ENCODE measurements at regions of chr12 and their contacts with region 1.

Region 1: GRCh38 chr12:124567661-124568373 is 405 bp upstream of the NCOR2 start:
- DNase-seq: peak; percentile 98
- ATAC-seq: peak; percentile 92
- H3K4me3 ChIP-seq: no peak overlapping the region
- H3K27ac ChIP-seq: peak overlapping the region in 1 of 2 donors; percentile 75
- H3K4me1 ChIP-seq: no peaks in the 10 kb centered on the region
- H3K27me3 ChIP-seq: no peaks in the 10 kb centered on the region

Region 2: GRCh38 chr12:124518051-124518932 is 49.5 kb before region 1 on chr12:
- intact Hi-C with region 1: loop called (anchors 1 to 5 kb)
- DNase-seq: peak; percentile 98 to 99
- ATAC-seq: peak; percentile 84
- H3K4me3 ChIP-seq: no peak overlapping the region
- H3K27ac ChIP-seq: peak overlapping the region; percentile 87 to 98
- H3K4me1 ChIP-seq: no peaks in the 10 kb centered on the region
- H3K27me3 ChIP-seq: no peaks in the 10 kb centered on the region

Region 3: GRCh38 chr12:124620751-124621660 is 53.2 kb after region 1 on chr12:
- intact Hi-C with region 1: loop called in 1 of 2 experiments (anchors 5 kb)
- DNase-seq: peak; percentile 86 to 90
- ATAC-seq: peak; percentile 71
- H3K4me3 ChIP-seq: no peak overlapping the region
- H3K27ac ChIP-seq: peak overlapping the region in 1 of 2 donors; percentile 68
- H3K4me1 ChIP-seq: no peaks in the 10 kb centered on the region
- H3K27me3 ChIP-seq: no peaks in the 10 kb centered on the region

Region 4: GRCh38 chr12:124675881-124676715 is 108.3 kb after region 1 on chr12:
- intact Hi-C with region 1: loop called in 1 of 2 experiments (anchors 5 kb)
- DNase-seq: peak; percentile 81 to 91
- ATAC-seq: peak; percentile 56
- H3K4me3 ChIP-seq: peak overlapping the region in 1 of 2 donors; percentile 14
- H3K27ac ChIP-seq: peak overlapping the region in 1 of 2 donors; percentile 41
- H3K4me1 ChIP-seq: no peaks in the 10 kb centered on the region
- H3K27me3 ChIP-seq: no peaks in the 10 kb centered on the region

Region 5: DNA sequence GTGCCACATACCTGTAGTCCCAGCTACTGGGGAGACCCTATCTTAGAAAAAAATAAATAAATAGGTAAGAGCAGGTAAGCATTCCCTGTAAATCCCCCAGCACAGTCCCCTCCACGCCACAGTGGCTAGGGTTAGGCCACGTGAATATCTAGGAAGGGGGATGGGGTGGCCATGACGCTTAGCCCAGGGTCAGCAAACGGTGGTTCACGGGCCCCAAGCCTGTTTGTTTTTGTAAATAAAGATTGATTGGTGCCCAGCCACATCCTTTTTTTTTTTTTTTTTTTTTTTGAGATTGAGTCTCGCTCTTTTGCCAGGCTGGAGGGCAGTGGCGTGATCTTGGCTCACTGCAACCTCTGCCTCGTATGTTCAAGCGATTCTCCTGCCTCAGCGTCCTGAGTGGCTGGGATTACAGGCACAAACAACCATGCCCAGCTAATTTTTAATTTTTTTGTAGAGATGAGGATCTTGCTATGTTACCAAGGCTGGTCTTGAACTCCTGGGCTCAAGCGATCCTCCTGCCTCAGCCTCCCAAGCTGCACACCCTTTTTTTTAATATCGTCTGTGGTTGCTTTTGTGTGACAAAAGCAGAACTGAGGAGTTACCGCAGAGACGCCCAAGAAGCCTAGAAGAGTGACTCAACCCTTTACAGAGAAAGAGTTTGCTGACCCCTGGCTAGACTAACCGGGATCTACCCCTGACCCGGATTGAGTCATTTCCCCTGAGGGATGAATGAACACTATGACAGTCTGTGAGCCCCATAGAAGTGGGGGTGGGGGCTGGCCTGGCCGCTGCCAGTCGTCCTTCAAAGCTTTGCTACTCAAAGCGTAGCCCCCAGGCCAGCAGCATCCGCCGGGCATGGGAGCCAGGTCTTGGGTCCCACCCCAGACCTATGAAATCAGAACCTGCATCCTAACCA is 113.3 kb after region 1 on chr12:
- intact Hi-C with region 1: loop called (anchors 5 kb)
- DNase-seq: peak; percentile 89 to 90
- ATAC-seq: peak; percentile 76
- H3K4me3 ChIP-seq: no peak overlapping the region
- H3K27ac ChIP-seq: peak overlapping the region in 1 of 2 donors; percentile 53
- H3K4me1 ChIP-seq: peaks cover 0 to 3% of the 10 kb centered on the region in 2 donors
- H3K27me3 ChIP-seq: no peaks in the 10 kb centered on the region

Region 6: GRCh38 chr12:124745891-124746570 is 178.2 kb after region 1 on chr12:
- intact Hi-C with region 1: loop called (anchors 5 kb)
- DNase-seq: peak; percentile 96 to 97
- ATAC-seq: peak; percentile 95
- H3K4me3 ChIP-seq: no peak overlapping the region
- H3K27ac ChIP-seq: peak overlapping the region; percentile 24 to 72
- H3K4me1 ChIP-seq: no peaks in the 10 kb centered on the region
- H3K27me3 ChIP-seq: no peaks in the 10 kb centered on the region